HepG2 (cell line): ENCODE measurements at regions of chr6 and their contacts with region 1.

Region 1: GRCh38 chr6:90701146-90701781 is 114.4 kb upstream of the MAP3K7 start:
- DNase-seq: no peak
- ATAC-seq: peak; percentile 41; the same call in 1 of the 3 replicates
- H3K4me3 ChIP-seq: no peak overlapping the region
- H3K27ac ChIP-seq: no peak overlapping the region
- H3K4me1 ChIP-seq: no peaks in the 10 kb centered on the region
- H3K27me3 ChIP-seq: no peaks in the 10 kb centered on the region
- CTCF ChIP-seq: no peak
- EP300 ChIP-seq: no peak
- POLR2A ChIP-seq: no peak
- RAD21 ChIP-seq: no peak

Region 2: DNA sequence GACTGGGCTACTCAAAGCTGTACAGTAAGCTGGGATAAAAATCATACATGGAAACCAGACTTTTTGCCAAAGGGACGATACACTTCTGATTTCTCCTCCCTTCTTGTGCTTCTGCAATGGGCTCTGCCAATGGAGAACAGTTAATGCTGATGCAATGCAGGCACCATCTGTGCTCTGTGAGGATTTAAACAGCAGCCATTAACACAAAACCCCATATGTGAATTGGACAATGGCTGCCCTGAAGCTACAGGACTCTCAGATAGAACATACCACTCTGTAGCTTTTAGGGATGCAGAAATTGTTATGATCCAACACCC is 735.1 kb before region 1 on chr6:
- CTCF ChIA-PET with region 1: no interaction called
- POLR2A ChIA-PET with region 1: no interaction called
- in situ Hi-C with region 1: no loop called
- intact Hi-C with region 1: no loop called
- DNase-seq: no peak
- ATAC-seq: no peak
- H3K4me3 ChIP-seq: no peak overlapping the region
- H3K27ac ChIP-seq: no peak overlapping the region
- H3K4me1 ChIP-seq: no peaks in the 10 kb centered on the region
- H3K27me3 ChIP-seq: peaks cover 2 to 11% of the 10 kb centered on the region in 2 experiments; a peak in 2 of 5 replicates
- CTCF ChIP-seq: no peak
- EP300 ChIP-seq: no peak
- POLR2A ChIP-seq: no peak
- RAD21 ChIP-seq: no peak

Region 3: DNA sequence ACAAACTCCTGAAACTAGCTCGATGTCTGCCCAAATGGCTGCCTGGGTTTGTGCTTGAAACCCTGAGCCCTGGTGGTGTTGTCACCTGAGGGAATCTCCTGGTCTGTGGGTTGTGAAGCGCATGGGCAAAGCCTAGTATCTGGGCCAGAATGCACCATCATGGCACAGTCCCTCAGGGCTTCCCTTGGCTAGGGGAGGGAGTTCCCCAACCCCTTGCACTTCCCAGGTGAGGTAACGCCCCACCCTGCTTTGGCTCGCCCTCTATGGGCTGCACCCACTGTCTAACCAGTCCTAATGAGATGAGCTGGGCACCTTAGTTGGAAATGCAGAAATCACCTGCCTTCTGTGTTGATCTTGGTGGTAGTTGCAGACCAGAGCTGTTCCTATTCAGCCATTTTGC is 38.5 kb after region 1 on chr6:
- CTCF ChIA-PET with region 1: no interaction called
- POLR2A ChIA-PET with region 1: no interaction called
- in situ Hi-C with region 1: no loop called
- intact Hi-C with region 1: loop called (anchors 2 kb)
- DNase-seq: no peak
- ATAC-seq: no peak
- H3K4me3 ChIP-seq: no peak overlapping the region
- H3K27ac ChIP-seq: no peak overlapping the region
- H3K4me1 ChIP-seq: no peaks in the 10 kb centered on the region
- H3K27me3 ChIP-seq: 0 out of 5 replicates have a peak, but pooled peaks cover 0 to under 1% of the 10 kb centered on the region in 2 experiments
- CTCF ChIP-seq: no peak
- EP300 ChIP-seq: no peak
- POLR2A ChIP-seq: no peak
- RAD21 ChIP-seq: no peak